ENCODE measurements at regions of chr3 and their contacts with region 1.

Region 1: GRCh38 chr3:192409357-192409824 is 317.9 kb downstream of the FGF12 start:
- DNase-seq: no peak
- H3K4me3 ChIP-seq: peak overlapping the region; percentile 64
- H3K27ac ChIP-seq: no peak overlapping the region
- H3K27me3 ChIP-seq: peaks cover 37% of the 10 kb centered on the region
- CTCF ChIP-seq: no peak

Region 2: DNA sequence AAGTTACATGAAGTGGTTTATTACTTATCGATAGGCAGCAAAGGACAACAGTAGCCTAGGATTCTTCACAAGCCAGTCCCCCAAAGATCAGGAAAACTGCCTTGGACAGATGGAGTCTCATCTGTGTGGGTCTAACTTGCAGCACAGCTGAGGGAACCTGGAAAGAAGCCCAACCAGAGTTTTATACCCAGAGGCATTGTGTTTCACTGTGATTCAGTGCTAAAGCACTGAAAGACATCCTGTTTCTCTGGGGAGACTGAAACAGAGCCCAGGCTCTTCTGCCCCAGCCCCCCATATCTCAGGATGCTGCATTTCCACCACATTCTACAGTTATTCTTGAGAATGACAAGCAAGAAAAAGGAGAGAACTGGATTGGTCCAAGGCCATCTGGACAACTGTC is 996.6 kb before region 1 on chr3:
- in situ Hi-C with region 1: loop called (anchors 25 kb)
- DNase-seq: peak; percentile 91
- H3K4me3 ChIP-seq: no peak overlapping the region
- H3K27ac ChIP-seq: peak overlapping the region; percentile 63
- H3K27me3 ChIP-seq: no peaks in the 10 kb centered on the region
- CTCF ChIP-seq: no peak

Region 3: GRCh38 chr3:191997579-191998268 is 411.7 kb before region 1 on chr3:
- in situ Hi-C with region 1: no loop called
- DNase-seq: no peak
- H3K4me3 ChIP-seq: no peak overlapping the region
- H3K27ac ChIP-seq: no peak overlapping the region
- H3K27me3 ChIP-seq: no peaks in the 10 kb centered on the region
- CTCF ChIP-seq: no peak

Region 4: DNA sequence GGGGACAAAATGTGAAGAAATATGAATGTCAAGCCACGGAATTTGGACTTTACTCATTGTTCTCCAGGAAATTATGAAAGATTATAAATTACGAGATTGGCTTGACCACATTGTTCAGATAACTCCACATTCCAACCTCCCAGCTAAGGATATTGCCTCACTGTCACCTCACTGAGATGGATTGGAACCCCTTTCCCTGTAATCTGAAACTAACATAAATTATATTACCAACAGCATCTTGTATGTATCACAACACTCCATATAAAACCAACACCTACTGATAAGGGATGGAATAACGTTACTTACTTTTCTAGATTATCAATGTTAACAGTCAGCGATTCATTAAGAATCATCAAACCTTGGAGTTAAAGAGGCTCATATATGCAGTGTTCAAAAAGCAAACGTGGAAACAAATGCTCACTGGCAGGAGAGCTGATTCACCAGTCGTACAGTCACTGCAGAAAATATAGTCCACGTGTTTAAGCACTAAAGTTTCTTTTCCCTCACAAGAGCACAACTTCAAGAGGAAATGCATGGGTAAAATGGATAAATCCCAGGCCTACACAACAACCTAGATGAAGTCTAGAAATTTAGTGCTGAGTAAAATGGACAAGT is 133.5 kb before region 1 on chr3:
- in situ Hi-C with region 1: no loop called
- DNase-seq: no peak
- H3K4me3 ChIP-seq: no peak overlapping the region
- H3K27ac ChIP-seq: no peak overlapping the region
- H3K27me3 ChIP-seq: no peaks in the 10 kb centered on the region
- CTCF ChIP-seq: no peak

Measured in brain microvascular endothelial cell (primary cell).